Lower leg skin (tissue), 4 donors: ENCODE measurements at regions of chr3 and their contacts with region 1.

Region 1: GRCh38 chr3:54538346-54538745 is 389.5 kb downstream of the LRTM1 start:
- DNase-seq: no peak
- H3K4me3 ChIP-seq: no peak overlapping the region
- CTCF ChIP-seq: no peak
- POLR2A ChIP-seq: no peak

Region 2: GRCh38 chr3:55675478-55675877 is 1137.1 kb after region 1 on chr3:
- intact Hi-C with region 1: loop called (anchors 5 kb)
- DNase-seq: no peak
- H3K4me3 ChIP-seq: no peak overlapping the region
- CTCF ChIP-seq: no peak
- POLR2A ChIP-seq: no peak